ENCODE measurements at regions of chr12 and their contacts with region 1.

Region 1: GRCh38 chr12:14769969-14770495 is 33.2 kb downstream of the WBP11 start:
- DNase-seq: peak; percentile 74 to 94 (median 86)
- ATAC-seq: peak; percentile 60 to 65 (median 62)
- H3K4me3 ChIP-seq: peak overlapping the region; percentile 81 to 96
- H3K4me3 Mint-ChIP-seq: peak overlapping the region; percentile 91 to 99 (median 99)
- H3K27ac ChIP-seq: peak overlapping the region; percentile 95
- H3K27ac Mint-ChIP-seq: peak overlapping the region; percentile 99
- H3K4me1 ChIP-seq: peaks cover 11 to 41% of the 10 kb centered on the region in 2 experiments
- H3K4me1 Mint-ChIP-seq: peaks cover 62 to 73% (median 63%) of the 10 kb centered on the region in 3 donors
- H3K27me3 ChIP-seq: no peaks in the 10 kb centered on the region
- H3K27me3 Mint-ChIP-seq: no peaks in the 10 kb centered on the region

Region 2: DNA sequence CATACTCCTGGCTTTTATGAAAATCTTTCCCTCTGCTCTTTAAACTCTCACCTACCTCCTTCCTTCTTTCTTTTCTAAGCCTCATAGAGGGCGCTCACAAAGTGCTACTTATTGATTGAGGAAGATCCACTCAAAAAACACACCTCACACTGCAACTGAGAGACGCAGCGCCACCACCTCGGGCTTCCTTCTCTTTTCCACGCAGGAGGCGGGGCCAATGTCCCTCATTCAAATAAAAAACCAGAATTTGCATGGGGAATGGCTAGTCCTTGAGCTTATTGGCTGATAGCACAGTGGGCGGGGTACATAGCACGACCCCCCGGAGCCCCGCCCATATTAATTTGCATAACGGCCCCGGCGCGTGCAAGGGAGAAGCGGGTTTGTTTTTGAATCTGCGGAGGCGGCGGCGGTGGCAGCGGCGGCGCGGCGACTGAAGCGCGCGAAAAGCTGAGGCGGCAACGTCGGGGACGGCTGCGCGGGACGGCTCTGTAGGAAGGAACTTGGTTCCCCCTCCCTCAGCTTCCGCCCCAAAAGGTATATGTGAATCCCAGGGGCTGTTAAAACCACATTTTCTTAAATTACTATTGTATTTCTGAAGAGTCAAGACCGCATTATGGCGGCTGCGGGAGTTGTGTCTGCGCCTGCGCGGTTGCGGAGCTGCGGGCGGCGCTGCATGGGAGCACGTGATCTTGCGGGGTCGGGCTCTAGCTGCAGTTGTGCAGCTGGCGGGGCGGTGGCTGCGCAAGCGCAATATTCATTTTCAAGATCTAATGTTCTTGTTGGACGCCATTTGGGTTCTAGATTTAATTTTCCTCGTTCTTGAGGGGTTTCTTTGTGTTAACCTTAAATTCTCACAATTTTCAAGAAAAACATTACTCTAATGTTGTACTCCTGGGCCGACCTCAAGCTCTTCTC is 404.5 kb before region 1 on chr12 and contains the start of gene ATF7IP:
- CTCF ChIA-PET with region 1: interaction called in 1 of 2 experiments, 13 read pairs
- POLR2A ChIA-PET with region 1: interaction called, 5 to 32 read pairs
- DNase-seq: peak; percentile 89 to 99 (median 96)
- ATAC-seq: peak; percentile 84 to 94 (median 92)
- H3K4me3 ChIP-seq: peak within 1 kb of the TSS; percentile 63 to 75
- H3K4me3 Mint-ChIP-seq: peak within 1 kb of the TSS; percentile 75 to 90 (median 85)
- H3K27ac ChIP-seq: peak within 1 kb of the TSS; percentile 97
- H3K27ac Mint-ChIP-seq: peak within 1 kb of the TSS; percentile 95 to 98
- H3K4me1 ChIP-seq: peaks cover 15 to 22% of the 10 kb centered on the region in 2 experiments
- H3K4me1 Mint-ChIP-seq: peaks cover 37 to 47% (median 44%) of the 10 kb centered on the region in 3 donors
- H3K27me3 ChIP-seq: no peaks in the 10 kb centered on the region
- H3K27me3 Mint-ChIP-seq: no peaks in the 10 kb centered on the region
- total RNA-seq, gene ATF7IP: 112 to 165 (median 147) TPM

Region 3: DNA sequence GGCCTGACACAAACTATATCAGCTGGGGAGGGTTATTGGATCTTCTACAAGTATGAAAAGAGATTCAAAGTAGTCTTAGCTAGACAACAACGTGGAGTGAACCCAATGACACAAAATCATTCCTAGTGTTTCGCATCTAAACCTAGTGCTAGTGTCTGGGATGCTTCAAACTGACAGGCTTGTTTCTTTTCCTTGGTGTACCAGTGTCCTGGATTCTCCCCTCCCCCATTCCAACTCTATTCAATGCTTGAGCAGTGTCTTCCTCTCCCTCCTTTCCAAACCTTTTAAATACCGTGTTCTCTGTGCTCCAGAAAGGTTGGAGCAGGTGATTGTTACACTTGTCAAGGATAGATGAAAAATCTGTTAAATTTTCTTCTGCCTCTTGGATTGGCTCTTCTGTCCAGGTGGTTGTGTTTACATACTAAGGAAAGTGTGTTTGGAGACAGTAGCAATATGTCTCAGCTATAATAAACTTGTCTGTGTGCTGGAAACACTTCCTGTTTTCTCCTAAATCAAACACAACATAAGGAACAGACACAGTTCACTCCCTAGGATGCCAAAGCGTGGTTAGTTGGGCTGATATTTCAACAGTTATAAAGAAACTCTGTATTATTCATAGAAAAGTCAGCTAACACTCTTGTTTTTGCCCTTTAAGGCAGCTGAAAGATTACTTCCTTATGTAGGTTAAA is 59.3 kb before region 1 on chr12:
- CTCF ChIA-PET with region 1: no interaction called
- POLR2A ChIA-PET with region 1: no interaction called
- DNase-seq: no peak
- ATAC-seq: no peak
- H3K4me3 ChIP-seq: no peak overlapping the region
- H3K4me3 Mint-ChIP-seq: no peak overlapping the region
- H3K27ac ChIP-seq: no peak overlapping the region
- H3K27ac Mint-ChIP-seq: no peak overlapping the region
- H3K4me1 ChIP-seq: no peaks in the 10 kb centered on the region
- H3K4me1 Mint-ChIP-seq: peaks cover 0 to 6% (median 3%) of the 10 kb centered on the region in 3 donors
- H3K27me3 ChIP-seq: peaks cover 0 to 3% of the 10 kb centered on the region in 2 experiments
- H3K27me3 Mint-ChIP-seq: peaks cover 27 to 31% of the 10 kb centered on the region in 2 donors

Region 4: DNA sequence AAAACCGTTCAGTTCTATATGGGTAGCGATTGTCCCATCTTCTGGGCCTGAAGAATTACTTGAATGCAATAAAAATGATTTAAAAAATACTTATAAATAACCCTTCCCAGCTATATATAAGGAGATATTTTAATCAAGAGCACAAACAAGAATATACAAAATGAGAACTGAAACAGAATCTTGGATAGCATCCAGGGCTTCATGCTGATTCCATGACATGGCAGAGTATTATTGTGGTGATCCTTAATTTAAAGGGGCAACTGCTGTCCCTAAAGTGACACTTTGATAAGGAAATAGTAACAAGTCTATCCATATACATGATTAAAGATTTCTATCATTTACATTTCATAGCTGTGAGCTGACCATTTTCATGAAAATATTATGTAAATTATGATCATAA is 14.4 kb after region 1 on chr12:
- CTCF ChIA-PET with region 1: interaction called in 1 of 2 experiments, 13 read pairs
- POLR2A ChIA-PET with region 1: interaction called, 4 to 7 read pairs
- DNase-seq: no peak
- ATAC-seq: no peak
- H3K4me3 ChIP-seq: no peak overlapping the region
- H3K4me3 Mint-ChIP-seq: no peak overlapping the region
- H3K27ac ChIP-seq: no peak overlapping the region
- H3K27ac Mint-ChIP-seq: no peak overlapping the region
- H3K4me1 ChIP-seq: no peaks in the 10 kb centered on the region
- H3K4me1 Mint-ChIP-seq: peaks cover 0 to 8% (median 4%) of the 10 kb centered on the region in 3 donors
- H3K27me3 ChIP-seq: no peaks in the 10 kb centered on the region
- H3K27me3 Mint-ChIP-seq: no peaks in the 10 kb centered on the region

Region 5: GRCh38 chr12:14803011-14803829 is 33.2 kb after region 1 on chr12 and contains the starts of genes C12orf60 and WBP11:
- CTCF ChIA-PET with region 1: interaction called, 9 to 122 read pairs
- POLR2A ChIA-PET with region 1: interaction called, 17 to 121 read pairs
- DNase-seq: peak; percentile 62 to 96 (median 87)
- ATAC-seq: peak; percentile 95 to 99 (median 96)
- H3K4me3 ChIP-seq: peak within 1 kb of the TSS; percentile 72 to 90
- H3K4me3 Mint-ChIP-seq: no peak within 1 kb of the TSS
- H3K27ac ChIP-seq: peak within 1 kb of the TSS; percentile 93
- H3K27ac Mint-ChIP-seq: no peak within 1 kb of the TSS
- H3K4me1 ChIP-seq: peaks cover 7 to 18% of the 10 kb centered on the region in 2 experiments
- H3K4me1 Mint-ChIP-seq: peaks cover 0 to 24% (median 17%) of the 10 kb centered on the region in 3 donors
- H3K27me3 ChIP-seq: no peaks in the 10 kb centered on the region
- H3K27me3 Mint-ChIP-seq: no peaks in the 10 kb centered on the region
- total RNA-seq, gene C12orf60: 0.50 to 1.4 (median 0.93) TPM in 4 of 5 donors, not detected in the other
- total RNA-seq, gene WBP11: 72.6 to 122 (median 80.6) TPM

Region 6: DNA sequence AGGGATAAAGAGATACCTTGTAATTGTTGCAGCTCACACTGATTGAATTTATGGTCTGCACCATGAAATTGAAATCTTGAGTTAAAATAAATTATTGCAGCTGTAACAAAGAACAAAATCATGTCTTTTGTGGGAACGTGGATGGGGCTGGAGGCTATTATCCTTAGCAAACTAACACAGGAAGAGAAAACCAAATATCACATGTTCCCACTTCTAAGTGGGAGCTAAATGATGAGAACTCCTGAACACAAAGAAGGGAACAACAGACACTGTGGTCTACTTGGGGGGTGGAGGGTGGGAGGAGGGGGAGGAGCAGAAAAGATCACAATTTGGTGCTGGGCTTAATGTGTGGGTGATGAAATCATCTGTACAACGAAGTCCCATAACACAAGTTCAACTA is 145.7 kb after region 1 on chr12:
- CTCF ChIA-PET with region 1: no interaction called
- POLR2A ChIA-PET with region 1: interaction called in 1 of 2 experiments, 13 read pairs
- DNase-seq: no peak
- ATAC-seq: no peak
- H3K4me3 ChIP-seq: no peak overlapping the region
- H3K4me3 Mint-ChIP-seq: no peak overlapping the region
- H3K27ac ChIP-seq: no peak overlapping the region
- H3K27ac Mint-ChIP-seq: no peak overlapping the region
- H3K4me1 ChIP-seq: peaks cover under 1 to 3% of the 10 kb centered on the region in 2 experiments
- H3K4me1 Mint-ChIP-seq: peaks cover 24 to 39% (median 25%) of the 10 kb centered on the region in 3 donors
- H3K27me3 ChIP-seq: no peaks in the 10 kb centered on the region
- H3K27me3 Mint-ChIP-seq: no peaks in the 10 kb centered on the region

Region 7: DNA sequence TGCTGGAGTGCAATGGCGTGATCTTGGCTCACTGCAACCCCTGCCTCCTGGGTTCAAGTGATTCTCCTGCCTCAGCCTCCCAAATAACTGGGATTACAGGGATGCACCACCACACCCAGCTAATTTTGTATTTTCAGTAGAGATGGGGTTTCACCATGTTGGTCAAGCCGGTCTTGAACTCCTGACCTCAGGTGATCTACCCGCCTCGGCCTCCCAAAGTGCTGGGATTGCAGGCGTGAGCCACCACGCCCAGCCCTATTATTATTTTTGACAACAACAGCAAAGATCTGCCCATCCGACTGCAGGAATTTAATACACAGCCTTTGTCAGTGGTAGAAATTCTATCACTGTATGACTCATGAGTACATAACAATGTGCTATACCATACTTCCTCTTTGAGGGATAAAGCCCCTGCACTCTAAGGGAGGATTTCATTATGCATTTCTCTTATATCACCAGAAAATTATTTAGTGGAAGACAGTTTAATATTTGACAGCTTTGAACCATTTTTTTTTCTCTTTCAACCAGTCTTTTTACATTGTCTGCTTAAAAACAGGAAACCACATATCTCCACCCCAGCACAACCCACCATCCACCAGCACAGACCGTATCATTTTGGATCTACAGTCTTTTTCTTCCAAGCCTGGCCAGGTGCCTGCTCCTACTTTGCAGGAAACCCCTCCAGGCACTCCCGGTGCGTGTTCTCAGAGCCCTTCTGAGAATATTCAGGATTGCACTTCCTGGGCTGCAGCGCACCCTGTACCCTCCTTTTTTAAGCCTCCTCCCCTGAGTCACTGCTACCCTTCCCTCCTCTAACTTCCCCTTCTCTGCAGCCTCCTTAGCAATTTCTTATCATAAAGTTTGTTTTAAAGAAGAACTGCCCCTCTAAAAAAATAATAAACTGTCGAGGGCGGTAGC is 190.8 kb after region 1 on chr12:
- CTCF ChIA-PET with region 1: interaction called in 1 of 2 experiments, 5 read pairs
- POLR2A ChIA-PET with region 1: interaction called, 3 to 22 read pairs
- DNase-seq: peak in 34 of 35 experiments; percentile 26 to 75 (median 54)
- ATAC-seq: peak; percentile 51 to 62 (median 61)
- H3K4me3 ChIP-seq: peak overlapping the region; percentile 77 to 88
- H3K4me3 Mint-ChIP-seq: peak overlapping the region; percentile 97 to 98 (median 98)
- H3K27ac ChIP-seq: peak overlapping the region; percentile 97
- H3K27ac Mint-ChIP-seq: peak overlapping the region; percentile 95 to 98
- H3K4me1 ChIP-seq: peaks cover 41 to 49% of the 10 kb centered on the region in 2 experiments
- H3K4me1 Mint-ChIP-seq: peaks cover 66 to 77% (median 71%) of the 10 kb centered on the region in 3 donors
- H3K27me3 ChIP-seq: no peaks in the 10 kb centered on the region
- H3K27me3 Mint-ChIP-seq: no peaks in the 10 kb centered on the region